ENCODE measurements at regions of chr18 and their contacts with region 1.

Region 1: GRCh38 chr18:50051288-50051687 is 143.7 kb downstream of the MYO5B start:
- DNase-seq: no peak
- ATAC-seq: no peak
- H3K4me3 ChIP-seq: no peak overlapping the region
- H3K27ac ChIP-seq: no peak overlapping the region
- H3K4me1 ChIP-seq: no peaks in the 10 kb centered on the region
- H3K27me3 ChIP-seq: no peaks in the 10 kb centered on the region
- CTCF ChIP-seq: peak in 4 of 12 donors; percentile 9 to 27 (median 18)
- POLR2A ChIP-seq: no peak

Region 2: GRCh38 chr18:49561289-49562193 is 489.7 kb before region 1 on chr18 and contains the start of gene LIPG:
- intact Hi-C with region 1: no loop called
- DNase-seq: peak in 4 of 5 donors; percentile 10 to 69 (median 36)
- ATAC-seq: peak in 3 of 4 donors; percentile 35 to 72 (median 45)
- H3K4me3 ChIP-seq: peak within 1 kb of the TSS; percentile 11 to 55 (median 40)
- H3K27ac ChIP-seq: no peak within 1 kb of the TSS
- H3K4me1 ChIP-seq: peaks cover 3 to 35% (median 21%) of the 10 kb centered on the region in 12 donors
- H3K27me3 ChIP-seq: peaks cover 12 to 53% (median 38%) of the 10 kb centered on the region in 9 donors
- CTCF ChIP-seq: no peak
- POLR2A ChIP-seq: no peak
- total RNA-seq, gene LIPG: 0.20 to 12.1 (median 1.1) TPM in 6 of 9 donors, not detected in the others

Region 3: DNA sequence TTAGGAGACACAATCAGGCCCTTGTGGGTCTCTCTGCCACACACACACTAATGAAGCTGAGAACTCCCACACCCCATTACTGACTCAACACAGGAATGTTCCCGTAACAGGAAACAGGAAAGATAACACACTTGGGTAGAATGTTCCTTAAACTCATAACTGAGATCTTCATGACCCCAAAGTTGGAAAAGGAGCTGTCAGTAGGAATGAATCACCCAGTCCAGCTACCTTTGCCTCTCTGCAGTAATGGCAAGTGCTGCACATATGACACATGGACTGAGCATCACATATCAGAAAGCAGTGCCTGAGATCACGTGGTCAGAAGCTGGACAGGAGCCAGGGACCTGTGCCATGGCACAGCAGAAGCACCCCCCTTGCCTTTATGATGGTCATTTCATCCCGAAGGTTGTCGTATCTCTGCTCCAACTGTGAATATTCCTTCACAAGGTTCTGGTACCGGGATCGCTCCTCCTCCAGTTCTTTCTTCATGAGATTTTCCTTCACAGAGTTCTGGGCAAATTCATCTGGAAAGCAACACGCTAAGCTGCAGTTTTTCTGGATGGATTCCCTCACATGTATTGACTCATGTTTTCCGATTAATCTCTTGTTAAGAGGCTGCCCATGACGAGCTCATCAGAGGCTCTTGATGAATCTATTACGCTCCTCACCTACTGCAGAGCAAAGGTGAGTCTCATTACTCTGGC is 172.6 kb before region 1 on chr18:
- intact Hi-C with region 1: no loop called
- DNase-seq: no peak
- ATAC-seq: no peak
- H3K4me3 ChIP-seq: no peak overlapping the region
- H3K27ac ChIP-seq: no peak overlapping the region
- H3K4me1 ChIP-seq: no peaks in the 10 kb centered on the region
- H3K27me3 ChIP-seq: peaks cover 0 to 8% (median 0%) of the 10 kb centered on the region in 9 donors
- CTCF ChIP-seq: no peak
- POLR2A ChIP-seq: no peak

Region 4: GRCh38 chr18:49988733-49989132 is 62.6 kb before region 1 on chr18:
- intact Hi-C with region 1: no loop called
- DNase-seq: peak in 3 of 5 donors; percentile 28 to 36 (median 29)
- ATAC-seq: peak; percentile 18 to 66 (median 55)
- H3K4me3 ChIP-seq: no peak overlapping the region
- H3K27ac ChIP-seq: peak overlapping the region in 1 of 12 donors; percentile 3
- H3K4me1 ChIP-seq: peaks cover 0 to 17% (median 7%) of the 10 kb centered on the region in 12 donors
- H3K27me3 ChIP-seq: peaks cover 0 to 2% (median 0%) of the 10 kb centered on the region in 9 donors
- CTCF ChIP-seq: no peak
- POLR2A ChIP-seq: no peak

Region 5: GRCh38 chr18:50194631-50195532 is 143.6 kb after region 1 on chr18 and contains the start of gene MYO5B:
- intact Hi-C with region 1: loop called in 2 of 10 experiments (anchors 5 to 10 kb)
- DNase-seq: peak in 3 of 5 donors; percentile 20 to 67 (median 42)
- ATAC-seq: peak in 3 of 4 donors; percentile 58 to 87 (median 81)
- H3K4me3 ChIP-seq: peak within 1 kb of the TSS; percentile 24 to 70 (median 56)
- H3K27ac ChIP-seq: no peak within 1 kb of the TSS
- H3K4me1 ChIP-seq: peaks cover 0 to 24% (median 4%) of the 10 kb centered on the region in 12 donors
- H3K27me3 ChIP-seq: peaks cover 4 to 85% (median 45%) of the 10 kb centered on the region in 9 donors
- CTCF ChIP-seq: peak in 11 of 12 donors; percentile 8 to 61 (median 37)
- POLR2A ChIP-seq: no peak
- total RNA-seq, gene MYO5B: 0.51 to 5.9 (median 1.6) TPM